ENCODE measurements at regions of chr3 and their contacts with region 1.

Region 1: GRCh38 chr3:125039131-125040100 is 16.4 kb downstream of the HEG1 start:
- DNase-seq: no peak
- ATAC-seq: no peak
- H3K4me3 ChIP-seq: no peak overlapping the region
- H3K27ac ChIP-seq: peak overlapping the region; percentile 3; the same call in 1 of the 2 replicates
- H3K4me1 ChIP-seq: peaks cover 43% of the 10 kb centered on the region
- H3K27me3 ChIP-seq: no peaks in the 10 kb centered on the region
- CTCF ChIP-seq: no peak

Region 2: GRCh38 chr3:125262161-125262560 is 222.7 kb after region 1 on chr3:
- CTCF ChIA-PET with region 1: no interaction called
- POLR2A ChIA-PET with region 1: interaction called, 13 read pairs
- in situ Hi-C with region 1: no loop called
- intact Hi-C with region 1: no loop called
- DNase-seq: no peak
- ATAC-seq: no peak
- H3K4me3 ChIP-seq: no peak overlapping the region
- H3K27ac ChIP-seq: no peak overlapping the region
- H3K4me1 ChIP-seq: no peaks in the 10 kb centered on the region
- H3K27me3 ChIP-seq: no peaks in the 10 kb centered on the region
- CTCF ChIP-seq: no peak

Region 3: GRCh38 chr3:126067959-126068358 is 1028.5 kb after region 1 on chr3:
- CTCF ChIA-PET with region 1: no interaction called
- POLR2A ChIA-PET with region 1: interaction called, 11 read pairs
- in situ Hi-C with region 1: no loop called
- intact Hi-C with region 1: no loop called
- DNase-seq: no peak
- ATAC-seq: no peak
- H3K4me3 ChIP-seq: no peak overlapping the region
- H3K27ac ChIP-seq: no peak overlapping the region
- H3K4me1 ChIP-seq: no peaks in the 10 kb centered on the region
- H3K27me3 ChIP-seq: no peaks in the 10 kb centered on the region
- CTCF ChIP-seq: no peak